ENCODE measurements at regions of chr7 and their contacts with region 1.

Region 1: DNA sequence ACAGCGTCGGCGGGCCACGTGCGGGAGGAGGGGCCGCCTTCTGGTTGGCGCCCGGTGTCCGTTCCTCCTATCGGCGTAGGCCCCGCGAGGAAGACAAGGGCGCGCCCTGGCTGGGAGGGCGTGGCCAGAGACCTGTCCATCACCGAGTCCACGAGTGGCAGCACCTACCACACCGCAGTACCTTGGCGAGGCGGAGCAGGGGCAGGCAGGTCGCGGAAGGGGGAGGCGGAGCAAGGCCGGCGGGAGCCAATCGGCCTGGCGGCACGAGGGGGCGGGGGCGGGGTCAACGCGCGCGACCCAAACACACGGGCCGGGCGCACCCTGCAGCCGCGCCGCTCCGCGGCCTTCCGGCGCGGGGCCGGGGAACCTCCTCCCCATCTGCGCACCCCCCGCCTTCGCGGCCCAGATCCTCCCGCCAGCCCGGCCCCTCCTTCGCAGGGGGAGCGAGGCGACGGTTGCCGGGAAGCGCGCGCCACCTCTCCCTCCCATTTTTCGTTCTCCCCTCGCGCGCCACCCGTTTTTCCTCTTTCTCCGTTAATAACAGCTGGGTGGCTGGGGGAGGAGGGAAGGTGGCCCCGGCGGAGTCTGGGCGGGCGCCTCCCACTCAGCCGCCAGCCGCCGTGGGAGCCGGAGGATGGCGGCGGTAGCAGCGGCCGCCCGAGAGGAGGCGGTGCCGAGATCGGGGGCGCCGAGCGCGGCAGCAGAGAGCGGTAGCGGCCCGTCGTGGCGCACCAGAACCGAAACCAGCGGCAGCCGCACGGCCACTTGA is at the start of gene ZNRF2:
- DNase-seq: peak; percentile 99 to 100
- H3K4me3 ChIP-seq: peak within 1 kb of the TSS; percentile 87
- H3K4me3 Mint-ChIP-seq: peak within 1 kb of the TSS; percentile 89
- H3K27ac Mint-ChIP-seq: peak within 1 kb of the TSS; percentile 88
- H3K4me1 ChIP-seq: peaks cover 9% of the 10 kb centered on the region; the same call in 1 of the 2 replicates
- H3K4me1 Mint-ChIP-seq: peaks cover 21% of the 10 kb centered on the region
- H3K27me3 ChIP-seq: no peaks in the 10 kb centered on the region
- H3K27me3 Mint-ChIP-seq: no peaks in the 10 kb centered on the region
- CTCF ChIP-seq: peak; percentile 24 to 51
- total RNA-seq, gene ZNRF2: 8.2 and 9.0 TPM in 2 replicates

Region 2: DNA sequence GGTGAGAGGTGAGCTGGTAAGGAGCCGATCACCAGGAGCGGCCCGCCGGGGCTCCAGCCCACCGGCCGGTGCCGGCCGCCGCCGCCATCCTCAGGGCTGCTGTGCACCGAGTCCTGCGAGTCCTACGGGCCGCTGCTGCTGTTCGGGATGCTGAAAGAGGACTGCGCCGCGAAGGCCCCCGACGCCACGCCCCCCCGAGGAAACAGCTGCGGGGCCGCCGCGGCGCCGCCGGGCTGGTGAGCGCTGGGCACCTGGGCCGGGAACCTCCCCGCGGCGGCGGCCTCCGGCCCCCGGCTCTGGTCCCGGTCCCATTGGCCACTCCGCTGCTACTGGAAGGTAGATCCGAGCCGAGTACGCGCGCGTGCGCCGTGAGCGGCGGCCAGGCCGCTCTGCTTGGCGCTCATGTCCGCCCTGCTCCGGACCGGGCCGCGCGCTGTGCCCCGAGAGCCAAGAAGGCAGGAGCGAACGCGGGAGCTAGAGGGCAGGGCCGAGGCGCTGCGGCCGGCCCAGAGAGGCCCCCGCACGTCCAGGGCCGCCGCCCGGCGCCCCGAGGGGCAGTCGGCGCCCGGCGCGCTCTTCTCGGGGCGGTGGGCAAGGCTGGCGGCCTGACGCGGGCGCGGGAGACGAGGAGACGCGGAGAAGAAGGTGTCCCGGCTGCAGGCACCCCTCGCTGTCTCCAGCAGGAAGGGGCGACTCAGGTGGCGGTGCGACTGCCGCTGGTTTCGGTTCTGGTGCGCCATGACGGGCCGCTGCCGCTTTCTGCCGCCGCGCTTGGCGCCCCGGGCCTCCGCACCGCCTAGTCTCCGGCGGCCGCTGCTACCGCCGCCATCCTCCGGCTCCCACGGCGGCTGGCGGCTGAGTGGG is 599.5 kb before region 1 on chr7:
- CTCF ChIA-PET with region 1: no interaction called
- POLR2A ChIA-PET with region 1: no interaction called
- intact Hi-C with region 1: loop called (anchors 10 kb)
- DNase-seq: peak; percentile 85 to 88
- H3K4me3 ChIP-seq: peak overlapping the region; percentile 72
- H3K4me3 Mint-ChIP-seq: peak overlapping the region; percentile 88
- H3K27ac Mint-ChIP-seq: peak overlapping the region; percentile 72
- H3K4me1 ChIP-seq: no peaks in the 10 kb centered on the region
- H3K4me1 Mint-ChIP-seq: no peaks in the 10 kb centered on the region
- H3K27me3 ChIP-seq: no peaks in the 10 kb centered on the region
- H3K27me3 Mint-ChIP-seq: no peaks in the 10 kb centered on the region
- CTCF ChIP-seq: no peak

Region 3: GRCh38 chr7:30026229-30027064 is 258.0 kb before region 1 on chr7 and contains the start of gene FKBP14:
- CTCF ChIA-PET with region 1: no interaction called
- POLR2A ChIA-PET with region 1: no interaction called
- intact Hi-C with region 1: no loop called
- DNase-seq: peak; percentile 97 to 99
- H3K4me3 ChIP-seq: peak within 1 kb of the TSS; percentile 89
- H3K4me3 Mint-ChIP-seq: no peak within 1 kb of the TSS
- H3K27ac Mint-ChIP-seq: peak within 1 kb of the TSS; percentile 94
- H3K4me1 ChIP-seq: peaks cover 8% of the 10 kb centered on the region
- H3K4me1 Mint-ChIP-seq: peaks cover 15% of the 10 kb centered on the region
- H3K27me3 ChIP-seq: no peaks in the 10 kb centered on the region
- H3K27me3 Mint-ChIP-seq: no peaks in the 10 kb centered on the region
- CTCF ChIP-seq: no peak
- total RNA-seq, gene FKBP14: 17.5 and 20.3 TPM in 2 replicates

Region 4: DNA sequence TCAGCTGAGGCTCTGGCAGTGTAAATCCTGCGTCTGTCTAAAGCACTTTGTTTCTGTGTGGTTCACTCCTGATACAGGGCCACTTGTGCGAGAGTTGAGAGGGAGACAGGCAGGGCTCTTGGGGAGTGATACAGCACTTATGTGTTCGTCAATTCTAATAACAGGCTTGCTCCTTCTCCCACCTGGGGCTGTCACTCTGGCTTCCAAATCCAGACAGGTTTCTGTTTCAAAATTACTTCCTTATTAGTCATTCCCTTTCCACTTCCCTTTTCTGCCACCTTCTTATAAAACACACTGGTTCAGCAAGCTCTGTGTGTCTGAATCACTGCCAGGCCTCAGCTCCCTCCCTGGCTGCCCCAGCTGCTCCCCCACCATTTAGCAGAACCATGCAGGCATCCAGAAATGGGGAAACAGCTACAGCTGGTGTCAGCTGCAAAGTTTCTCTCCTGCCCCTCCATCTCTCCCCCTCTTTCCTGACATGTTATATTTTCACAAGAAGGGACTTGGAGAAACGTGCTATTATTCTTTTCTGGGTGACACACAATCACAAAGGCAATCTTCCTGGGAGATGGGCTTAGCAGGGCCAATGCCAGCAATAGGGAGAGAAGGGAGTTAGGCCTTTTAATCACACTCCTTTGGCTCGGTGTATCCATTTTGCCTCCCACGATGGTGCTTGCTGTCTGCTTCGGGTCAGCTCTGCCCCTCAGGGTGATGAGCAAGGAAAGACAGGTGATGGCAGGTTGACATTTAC is 58.4 kb before region 1 on chr7:
- CTCF ChIA-PET with region 1: no interaction called
- POLR2A ChIA-PET with region 1: no interaction called
- intact Hi-C with region 1: loop called (anchors 2 kb)
- DNase-seq: no peak
- H3K4me3 ChIP-seq: no peak overlapping the region
- H3K4me3 Mint-ChIP-seq: no peak overlapping the region
- H3K27ac Mint-ChIP-seq: no peak overlapping the region
- H3K4me1 ChIP-seq: 0 out of 2 replicates have a peak, but pooled peaks cover 5% of the 10 kb centered on the region
- H3K4me1 Mint-ChIP-seq: peaks cover 15% of the 10 kb centered on the region
- H3K27me3 ChIP-seq: no peaks in the 10 kb centered on the region; the same call in 1 of the 2 replicates
- H3K27me3 Mint-ChIP-seq: peaks cover 3% of the 10 kb centered on the region
- CTCF ChIP-seq: no peak

Region 5: DNA sequence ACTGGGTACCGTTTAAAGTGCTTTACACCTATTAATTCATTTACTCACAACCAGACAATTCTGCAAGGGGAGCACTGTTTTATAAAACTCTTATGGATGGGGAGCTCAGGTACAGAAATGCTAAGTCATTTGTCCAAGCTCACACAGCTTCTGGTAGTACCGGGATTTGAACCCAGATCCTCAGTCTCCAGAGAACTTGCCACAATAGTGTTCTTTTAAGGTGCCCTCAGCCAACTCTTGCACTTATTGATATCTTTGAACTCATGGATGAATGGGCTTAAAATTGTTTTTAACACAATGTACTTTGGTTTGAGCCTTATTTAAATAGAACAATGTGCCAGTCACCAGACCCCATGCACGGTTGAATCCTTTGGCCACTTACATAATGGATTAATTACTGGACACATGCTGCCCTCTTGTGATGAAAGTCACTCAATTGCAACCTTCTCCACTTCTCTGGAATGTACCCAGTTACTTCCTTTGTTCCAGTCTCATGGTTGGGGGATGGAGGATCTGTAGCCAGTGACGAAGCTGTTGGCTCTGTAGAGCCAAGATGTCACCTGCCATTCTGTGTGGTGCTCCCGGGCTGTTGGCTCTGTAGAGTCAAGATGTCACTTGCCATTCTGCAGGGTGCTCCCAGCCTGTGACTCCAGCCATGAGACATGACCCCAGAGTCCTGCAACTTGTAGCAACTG is 128.5 kb after region 1 on chr7:
- CTCF ChIA-PET with region 1: no interaction called
- POLR2A ChIA-PET with region 1: no interaction called
- intact Hi-C with region 1: loop called (anchors 2 kb)
- DNase-seq: peak in 1 of 2 experiments; percentile 46
- H3K4me3 ChIP-seq: no peak overlapping the region
- H3K4me3 Mint-ChIP-seq: no peak overlapping the region
- H3K27ac Mint-ChIP-seq: no peak overlapping the region
- H3K4me1 ChIP-seq: no peaks in the 10 kb centered on the region
- H3K4me1 Mint-ChIP-seq: no peaks in the 10 kb centered on the region
- H3K27me3 ChIP-seq: no peaks in the 10 kb centered on the region
- H3K27me3 Mint-ChIP-seq: no peaks in the 10 kb centered on the region
- CTCF ChIP-seq: no peak

Region 6: DNA sequence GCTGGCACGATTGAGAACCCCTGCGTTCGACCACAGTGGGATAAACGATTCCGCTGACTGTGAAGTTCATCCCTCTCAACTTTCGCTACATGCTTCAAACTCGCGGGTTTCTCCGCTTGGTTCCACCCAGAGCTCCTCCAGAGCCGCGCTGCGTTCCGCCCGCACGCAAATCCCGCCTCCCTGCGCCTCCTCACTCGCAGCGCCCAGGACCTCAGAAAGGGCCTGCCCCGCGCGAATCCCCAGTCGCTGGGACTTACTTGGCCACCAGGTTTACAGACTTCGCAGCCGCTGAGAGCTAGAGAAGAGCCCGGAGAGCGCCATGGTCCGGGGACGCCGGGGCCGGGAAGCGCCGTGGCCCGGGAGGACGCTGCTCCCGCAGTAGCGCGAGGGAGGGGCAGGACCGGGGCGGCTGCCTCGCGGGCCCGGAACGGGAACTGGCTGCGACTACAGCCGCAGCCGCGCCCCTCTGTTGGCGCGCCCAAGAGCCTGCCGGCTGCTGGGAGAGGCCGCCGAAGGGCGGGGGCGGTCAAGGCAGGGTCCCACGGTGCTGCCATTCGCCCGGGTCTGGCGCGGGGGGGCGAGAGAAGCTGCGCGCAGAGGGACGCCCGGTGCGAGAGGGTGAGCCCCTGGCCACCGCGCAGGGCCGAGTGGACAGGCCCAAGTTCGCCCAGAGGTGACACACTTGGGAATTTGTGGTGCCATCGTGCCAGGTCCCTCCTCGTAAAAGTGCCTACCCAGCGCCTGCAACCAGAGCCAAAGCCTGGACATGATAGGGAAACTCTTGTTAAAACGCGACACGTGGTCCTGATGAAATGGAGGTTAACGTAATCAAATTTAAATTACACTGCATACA is 194.1 kb after region 1 on chr7 and contains the start of gene NOD1:
- CTCF ChIA-PET with region 1: no interaction called
- POLR2A ChIA-PET with region 1: no interaction called
- intact Hi-C with region 1: loop called (anchors 10 kb)
- DNase-seq: peak; percentile 72 to 84
- H3K4me3 ChIP-seq: peak within 1 kb of the TSS; percentile 61
- H3K4me3 Mint-ChIP-seq: peak within 1 kb of the TSS; percentile 82
- H3K27ac Mint-ChIP-seq: peak within 1 kb of the TSS; percentile 55
- H3K4me1 ChIP-seq: 0 out of 2 replicates have a peak, but pooled peaks cover 10% of the 10 kb centered on the region
- H3K4me1 Mint-ChIP-seq: peaks cover 10% of the 10 kb centered on the region
- H3K27me3 ChIP-seq: no peaks in the 10 kb centered on the region
- H3K27me3 Mint-ChIP-seq: no peaks in the 10 kb centered on the region
- CTCF ChIP-seq: peak in 1 of 2 experiments; percentile 1
- total RNA-seq, gene NOD1: 5.4 and 7.0 TPM in 2 replicates

Measured in Caco-2 (cell line).